ENCODE measurements at regions of chr10 and their contacts with region 1.

Region 1: DNA sequence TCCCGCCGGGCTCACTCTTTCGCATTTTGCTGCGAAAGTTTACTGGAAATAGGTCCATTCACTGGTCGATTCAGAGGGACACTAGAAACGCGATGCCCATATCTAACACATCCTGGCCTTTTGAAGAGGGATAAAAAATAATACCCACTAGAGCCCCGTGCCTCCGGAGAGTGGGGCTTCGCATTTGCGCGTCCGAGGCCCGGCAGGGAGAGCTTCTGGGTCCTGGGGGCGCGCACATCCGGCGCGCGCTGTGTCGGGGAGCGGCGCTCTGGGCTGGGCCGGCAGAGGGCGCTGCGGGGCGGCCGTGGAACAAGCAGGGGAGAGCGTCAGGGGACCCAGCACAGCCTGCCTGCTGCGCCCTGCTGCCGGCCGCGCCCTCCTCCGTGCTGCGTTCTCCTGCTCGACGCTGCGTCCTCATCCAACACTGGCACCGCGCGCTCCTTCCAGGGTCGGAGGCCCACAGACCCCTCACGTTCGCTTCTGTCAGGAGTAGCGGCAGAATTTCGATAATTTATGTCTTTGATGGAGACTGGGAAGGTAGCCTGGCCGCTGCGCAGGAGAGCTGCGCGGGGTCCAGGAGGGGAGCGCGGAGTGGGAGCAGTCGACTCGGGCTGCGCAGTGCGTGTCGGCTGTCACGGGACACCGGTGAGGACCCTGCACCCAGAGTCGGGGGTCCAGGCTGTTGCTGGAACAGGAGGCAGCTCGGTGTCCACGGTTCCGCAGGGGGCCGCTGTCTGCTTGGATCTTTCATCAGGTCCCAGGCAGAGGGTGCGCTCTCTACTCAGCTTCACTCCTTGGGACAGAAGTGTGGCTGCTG is 41.5 kb upstream of the ZNF32 start:
- DNase-seq: peak; percentile 32
- H3K4me3 ChIP-seq: peak overlapping the region; percentile 48
- CTCF ChIP-seq: peak; percentile 81

Region 2: DNA sequence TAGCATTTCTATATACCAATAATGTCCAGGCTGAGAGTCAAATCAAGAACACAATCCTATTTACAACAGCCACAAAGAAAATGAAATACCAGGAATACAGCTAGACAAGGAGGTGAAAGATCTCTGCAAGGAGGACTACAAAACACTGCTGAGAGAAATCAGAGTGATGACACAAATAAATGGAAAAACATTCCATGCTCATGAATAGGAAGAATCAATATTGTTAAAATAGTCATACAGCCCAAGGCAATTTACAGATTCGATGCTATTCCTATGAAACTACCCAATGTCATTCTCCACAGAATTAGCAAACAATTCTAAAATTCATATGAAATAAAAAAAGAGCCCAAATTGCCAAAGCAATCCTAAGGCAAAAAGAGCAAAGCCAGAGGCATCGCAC is 75.4 kb after region 1 on chr10:
- in situ Hi-C with region 1: no loop called
- DNase-seq: no peak
- H3K4me3 ChIP-seq: no peak overlapping the region
- CTCF ChIP-seq: no peak

Region 3: GRCh38 chr10:44071479-44071878 is 381.3 kb after region 1 on chr10:
- in situ Hi-C with region 1: no loop called
- DNase-seq: peak; percentile 60
- H3K4me3 ChIP-seq: no peak overlapping the region
- CTCF ChIP-seq: no peak

Region 4: GRCh38 chr10:44864637-44865288 is 1174.6 kb after region 1 on chr10:
- in situ Hi-C with region 1: loop called (anchors 25 kb)
- DNase-seq: peak; percentile 57
- H3K4me3 ChIP-seq: peak overlapping the region; percentile 51
- CTCF ChIP-seq: peak; percentile 94